Activated naive CD8-positive, alpha-beta T cell treated with anti-CD3 and anti-CD28 coated beads, Interleukin-2, amount 10 ng/mL, durations not matched to agents 7 days and 5 days (primary cell): ENCODE measurements at regions of chr3 and their contacts with region 1.

Region 1: DNA sequence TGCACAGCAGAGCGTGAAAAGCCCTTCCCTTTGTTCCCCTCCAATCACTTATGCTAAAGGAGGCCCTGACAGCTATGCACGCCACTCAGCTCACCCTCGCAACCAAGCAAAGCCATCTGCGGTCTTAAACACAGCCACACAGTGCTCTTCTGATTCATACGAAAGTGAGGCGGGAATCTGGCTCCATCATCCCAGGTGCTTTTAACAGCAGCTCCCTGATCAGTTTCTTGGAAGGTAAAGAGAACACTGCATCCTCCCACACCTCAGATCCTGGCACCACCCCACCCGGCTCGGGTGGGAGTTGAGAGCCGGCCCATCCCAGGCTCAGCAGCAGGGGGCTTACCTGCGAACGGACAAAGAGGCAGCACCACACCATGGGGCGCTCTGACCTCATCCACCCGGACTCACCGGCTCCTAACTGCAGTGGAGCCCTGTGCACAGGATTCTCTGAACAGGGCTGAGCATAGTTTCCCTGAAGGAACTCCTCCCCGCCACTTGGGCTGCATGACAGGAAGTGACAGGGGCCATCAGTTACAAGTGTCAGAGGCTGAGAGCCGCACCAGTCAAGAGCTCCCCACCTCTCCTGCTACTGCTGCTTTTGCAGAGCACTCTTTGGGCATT is 114.3 kb upstream of the ARHGEF3 start:
- DNase-seq: peak; percentile 77
- ATAC-seq: peak; percentile 93
- H3K4me3 Mint-ChIP-seq: peak overlapping the region; percentile 89
- H3K27ac Mint-ChIP-seq: peak overlapping the region; percentile 96
- H3K4me1 Mint-ChIP-seq: peaks cover 65% of the 10 kb centered on the region
- H3K27me3 Mint-ChIP-seq: no peaks in the 10 kb centered on the region

Region 2: DNA sequence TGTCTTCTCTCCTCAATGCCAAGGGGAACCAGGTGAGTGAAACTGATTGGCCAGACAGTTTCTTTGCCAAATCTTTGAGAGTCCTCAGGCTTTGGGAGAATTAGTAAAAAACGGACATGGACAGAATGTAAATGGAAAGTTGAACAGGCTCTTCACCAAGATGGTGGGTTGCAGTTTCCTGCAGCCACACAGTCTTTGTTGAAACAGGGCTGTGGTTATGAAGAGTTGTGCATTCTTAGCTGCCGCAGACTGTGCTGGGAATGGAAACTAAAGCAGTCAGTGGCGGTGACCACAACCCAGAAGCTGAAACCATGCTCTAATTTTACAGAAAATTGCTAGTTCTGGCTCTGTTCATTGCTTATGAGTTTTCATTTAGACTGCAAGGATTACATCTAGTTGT is 190.9 kb before region 1 on chr3:
- POLR2A ChIA-PET with region 1: interaction called, 11 read pairs
- DNase-seq: peak; percentile 63
- ATAC-seq: peak; percentile 90
- H3K4me3 Mint-ChIP-seq: peak overlapping the region; percentile 75
- H3K27ac Mint-ChIP-seq: peak overlapping the region; percentile 95
- H3K4me1 Mint-ChIP-seq: peaks cover 63% of the 10 kb centered on the region
- H3K27me3 Mint-ChIP-seq: no peaks in the 10 kb centered on the region

Region 3: GRCh38 chr3:56783644-56784447 is 132.2 kb before region 1 on chr3:
- POLR2A ChIA-PET with region 1: interaction called, 16 read pairs
- DNase-seq: peak; percentile 59
- ATAC-seq: peak; percentile 88
- H3K4me3 Mint-ChIP-seq: peak overlapping the region; percentile 76
- H3K27ac Mint-ChIP-seq: peak overlapping the region; percentile 90
- H3K4me1 Mint-ChIP-seq: peaks cover 85% of the 10 kb centered on the region
- H3K27me3 Mint-ChIP-seq: no peaks in the 10 kb centered on the region

Region 4: GRCh38 chr3:56825567-56826438 is 90.3 kb before region 1 on chr3:
- POLR2A ChIA-PET with region 1: no interaction called
- DNase-seq: no peak
- ATAC-seq: no peak
- H3K4me3 Mint-ChIP-seq: peak overlapping the region; percentile 4
- H3K27ac Mint-ChIP-seq: peak overlapping the region; percentile 3
- H3K4me1 Mint-ChIP-seq: peaks cover 39% of the 10 kb centered on the region
- H3K27me3 Mint-ChIP-seq: no peaks in the 10 kb centered on the region

Region 5: DNA sequence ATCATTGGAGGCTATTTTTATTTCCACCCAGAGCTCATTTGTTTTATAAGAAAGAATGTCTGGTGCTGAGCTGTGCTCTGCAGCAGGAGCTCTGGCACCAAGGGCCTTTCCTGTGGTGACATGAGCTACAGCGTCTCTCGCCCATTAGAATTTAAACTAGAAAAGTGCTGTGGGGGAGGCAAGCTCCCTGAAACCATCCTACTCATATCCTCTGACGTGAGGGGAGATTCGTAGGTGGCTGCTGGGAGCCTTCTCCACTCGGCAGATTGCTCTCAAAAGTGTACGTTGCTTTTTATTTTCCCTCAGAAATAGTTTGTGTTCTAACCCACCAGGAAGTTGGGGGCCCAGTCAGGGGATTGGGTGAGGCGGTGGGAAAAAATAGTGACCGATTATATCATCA is 38.0 kb before region 1 on chr3:
- POLR2A ChIA-PET with region 1: interaction called, 17 read pairs
- DNase-seq: no peak
- ATAC-seq: peak; percentile 95
- H3K4me3 Mint-ChIP-seq: peak overlapping the region; percentile 63
- H3K27ac Mint-ChIP-seq: peak overlapping the region; percentile 88
- H3K4me1 Mint-ChIP-seq: peaks cover 57% of the 10 kb centered on the region
- H3K27me3 Mint-ChIP-seq: no peaks in the 10 kb centered on the region

Region 6: DNA sequence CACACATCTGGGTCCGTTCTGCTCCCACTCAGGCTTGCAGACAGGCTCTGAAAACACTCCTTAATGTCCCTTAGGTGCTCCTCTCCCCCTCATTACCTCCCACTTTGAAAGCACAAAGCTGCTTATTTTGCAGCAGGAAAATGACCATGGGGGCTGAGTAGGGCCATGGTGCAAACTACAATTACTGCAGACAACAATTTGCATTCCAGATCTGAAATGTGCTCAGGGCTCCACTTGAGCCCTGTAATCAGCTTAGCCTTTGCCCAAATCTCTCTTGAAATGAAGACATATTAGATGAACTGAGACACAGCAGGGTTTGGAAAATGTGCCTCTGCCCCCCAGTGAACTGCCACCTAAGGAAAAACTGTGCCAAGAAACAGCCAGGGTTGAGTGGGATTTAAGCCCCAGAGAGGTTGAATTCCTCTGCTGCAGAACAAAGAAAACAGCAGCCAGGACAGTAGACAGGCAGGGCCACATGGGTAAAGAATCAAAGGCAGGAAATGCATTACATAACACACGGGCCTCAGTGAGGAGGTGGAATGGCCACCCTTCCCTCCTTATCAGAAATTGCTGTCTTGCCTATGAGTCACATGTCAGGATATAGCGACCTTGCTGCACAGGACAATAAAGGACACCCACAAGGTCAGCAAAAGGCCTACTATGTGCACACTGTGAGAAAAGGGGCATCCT is 12.4 kb after region 1 on chr3:
- POLR2A ChIA-PET with region 1: interaction called, 26 read pairs
- DNase-seq: no peak
- ATAC-seq: peak; percentile 81
- H3K4me3 Mint-ChIP-seq: peak overlapping the region; percentile 29
- H3K27ac Mint-ChIP-seq: peak overlapping the region; percentile 82
- H3K4me1 Mint-ChIP-seq: peaks cover 48% of the 10 kb centered on the region
- H3K27me3 Mint-ChIP-seq: no peaks in the 10 kb centered on the region

Region 7: DNA sequence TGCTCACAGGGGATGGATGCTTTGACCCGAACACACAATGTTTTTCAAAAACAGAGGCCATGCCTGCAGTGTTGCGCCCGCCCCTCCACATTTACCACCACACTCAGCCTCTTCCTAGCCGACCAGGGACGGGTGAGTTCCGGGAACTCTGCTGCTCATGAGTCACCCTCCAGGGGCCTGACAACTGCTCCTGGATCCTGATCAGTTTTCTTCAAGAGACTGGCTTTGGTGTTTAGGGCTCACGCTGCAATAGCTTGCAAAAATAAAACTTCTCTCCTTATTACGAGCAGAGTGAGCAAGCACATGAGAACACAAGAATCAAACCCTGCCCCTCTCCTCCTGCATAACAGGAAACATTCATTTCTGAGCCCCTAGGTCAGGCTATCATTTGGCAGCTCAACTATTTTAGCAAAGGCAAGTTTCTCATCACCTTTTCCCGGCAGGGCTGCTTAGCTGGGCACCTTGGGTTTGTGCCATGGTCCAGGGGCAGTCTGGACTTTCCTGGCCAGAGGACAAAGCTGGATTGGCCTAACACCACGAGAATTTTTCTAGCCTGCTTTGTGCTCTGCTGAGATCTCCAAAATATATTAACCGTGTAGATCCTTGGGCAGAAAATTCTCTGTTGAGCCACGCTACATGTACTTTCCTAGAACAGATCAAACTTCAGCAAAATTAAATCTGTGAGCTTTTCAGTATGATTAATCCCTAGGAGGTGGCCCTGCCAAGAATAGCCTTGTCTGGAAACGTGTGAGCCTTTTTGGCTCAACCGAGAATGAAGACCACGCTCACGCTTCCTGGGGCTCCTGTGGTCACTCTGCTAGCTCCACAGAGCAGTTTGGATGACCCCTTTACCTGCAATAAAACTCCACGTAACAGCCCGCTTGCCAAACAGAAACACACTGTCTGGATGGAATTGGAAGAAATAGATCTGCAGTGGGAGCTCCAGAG is 91.7 kb after region 1 on chr3:
- POLR2A ChIA-PET with region 1: no interaction called
- DNase-seq: no peak
- ATAC-seq: peak; percentile 74
- H3K4me3 Mint-ChIP-seq: peak overlapping the region; percentile 53
- H3K27ac Mint-ChIP-seq: peak overlapping the region; percentile 69
- H3K4me1 Mint-ChIP-seq: peaks cover 4% of the 10 kb centered on the region
- H3K27me3 Mint-ChIP-seq: no peaks in the 10 kb centered on the region